IMR-90 (cell line): ENCODE measurements at regions of chr10 and their contacts with region 1.

Region 1: GRCh38 chr10:29443745-29444523 is 155.1 kb downstream of the LYZL1 start:
- DNase-seq: peak; percentile 25
- ATAC-seq: peak; percentile 36; the same call in 1 of the 2 replicates
- H3K4me3 ChIP-seq: no peak overlapping the region
- H3K27ac ChIP-seq: no peak overlapping the region
- H3K4me1 ChIP-seq: peaks cover 4% of the 10 kb centered on the region
- H3K27me3 ChIP-seq: no peaks in the 10 kb centered on the region
- CTCF ChIP-seq: no peak
- POLR2A ChIP-seq: no peak
- RAD21 ChIP-seq: no peak

Region 2: GRCh38 chr10:29392376-29393021 is 51.4 kb before region 1 on chr10:
- CTCF ChIA-PET with region 1: no interaction called
- POLR2A ChIA-PET with region 1: no interaction called
- dilution Hi-C with region 1: no loop called
- in situ Hi-C with region 1: no loop called
- intact Hi-C with region 1: loop called (anchors 2 kb)
- DNase-seq: peak; percentile 31
- ATAC-seq: peak; percentile 94
- H3K4me3 ChIP-seq: no peak overlapping the region
- H3K27ac ChIP-seq: no peak overlapping the region
- H3K4me1 ChIP-seq: no peaks in the 10 kb centered on the region
- H3K27me3 ChIP-seq: peaks cover 50% of the 10 kb centered on the region
- CTCF ChIP-seq: peak; percentile 67
- POLR2A ChIP-seq: no peak
- RAD21 ChIP-seq: peak; percentile 60